ENCODE measurements at regions of chr11 and their contacts with region 1.

Region 1: DNA sequence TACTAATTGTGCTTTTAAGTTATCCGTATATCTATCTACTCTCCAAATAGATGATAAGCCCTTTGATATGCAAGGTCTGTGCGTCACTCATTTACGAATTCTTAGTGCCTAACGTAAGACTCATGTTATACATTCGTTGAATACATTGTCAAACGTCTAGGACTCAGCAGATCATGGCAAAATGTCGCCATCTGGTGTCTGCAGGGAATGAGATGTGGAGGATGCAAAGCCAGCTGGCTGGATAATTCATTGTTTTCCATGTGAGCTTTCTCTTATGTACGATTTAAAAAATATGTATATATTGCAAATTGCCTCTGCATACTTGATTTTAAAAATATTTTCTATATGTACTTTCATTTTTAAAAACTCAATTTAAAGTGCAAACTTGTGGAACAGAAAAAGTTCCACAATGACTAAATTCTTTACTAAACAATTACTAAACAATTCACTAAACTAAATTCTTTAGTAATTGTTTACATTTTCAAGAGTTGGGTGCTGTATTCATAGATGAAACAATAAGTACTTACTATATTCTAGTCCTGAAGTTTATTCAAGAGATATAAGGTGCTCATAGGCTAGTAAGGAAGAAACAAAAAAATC is 33.8 kb downstream of the ZNF202 start:
- DNase-seq: peak; percentile 78
- H3K4me3 Mint-ChIP-seq: no peak overlapping the region
- H3K27ac Mint-ChIP-seq: no peak overlapping the region
- H3K4me1 Mint-ChIP-seq: no peaks in the 10 kb centered on the region
- H3K27me3 Mint-ChIP-seq: peaks cover 15% of the 10 kb centered on the region
- CTCF ChIP-seq: peak; percentile 84

Region 2: DNA sequence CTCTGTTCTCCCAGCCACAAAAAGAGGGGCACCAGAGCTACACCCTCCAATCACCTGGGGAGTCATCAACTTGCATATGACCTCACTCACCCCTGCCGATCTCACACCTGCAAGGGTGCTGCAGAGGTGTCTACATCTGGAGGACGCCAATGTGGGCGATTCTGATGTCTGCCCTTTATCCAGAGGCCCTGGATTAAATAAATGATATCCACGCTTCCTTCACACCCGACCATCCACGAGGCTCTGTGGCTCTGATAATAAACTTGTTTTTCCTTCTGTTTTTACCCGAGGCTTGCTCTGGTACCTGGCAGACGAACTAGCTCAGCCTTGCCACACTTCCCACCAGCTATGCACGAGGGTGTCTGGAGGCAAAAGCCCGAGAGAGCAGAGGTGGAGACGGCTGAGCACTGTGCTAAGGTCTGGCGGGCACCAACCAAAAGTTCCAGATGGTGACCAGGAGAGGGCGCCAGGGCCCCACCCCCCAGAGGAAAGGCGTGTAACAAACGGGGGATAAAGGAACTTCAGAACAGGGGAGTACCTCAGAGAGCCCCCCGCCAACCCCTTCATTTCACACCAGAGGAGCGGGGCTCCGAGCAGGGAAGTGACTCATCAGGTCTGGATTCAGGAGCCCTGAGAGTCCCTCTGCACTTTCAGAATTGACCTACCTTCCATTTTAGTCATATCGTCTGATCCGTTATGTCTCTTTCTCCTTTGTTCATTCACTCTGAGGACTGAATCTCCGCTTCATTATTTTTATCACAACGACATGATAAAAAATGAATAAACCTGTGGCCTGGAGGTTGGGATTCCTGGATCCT is 66.8 kb before region 1 on chr11:
- CTCF ChIA-PET with region 1: interaction called, 558 read pairs
- POLR2A ChIA-PET with region 1: interaction called, 8 read pairs
- intact Hi-C with region 1: loop called (anchors 1 kb)
- DNase-seq: peak; percentile 54
- H3K4me3 Mint-ChIP-seq: no peak overlapping the region
- H3K27ac Mint-ChIP-seq: no peak overlapping the region
- H3K4me1 Mint-ChIP-seq: peaks cover 5% of the 10 kb centered on the region
- H3K27me3 Mint-ChIP-seq: peaks cover 37% of the 10 kb centered on the region
- CTCF ChIP-seq: peak; percentile 97

Region 3: GRCh38 chr11:123696183-123696582 is 11.5 kb before region 1 on chr11:
- CTCF ChIA-PET with region 1: interaction called, 17 read pairs
- POLR2A ChIA-PET with region 1: interaction called, 6 read pairs
- intact Hi-C with region 1: no loop called
- DNase-seq: peak; percentile 26
- H3K4me3 Mint-ChIP-seq: no peak overlapping the region
- H3K27ac Mint-ChIP-seq: no peak overlapping the region
- H3K4me1 Mint-ChIP-seq: no peaks in the 10 kb centered on the region
- H3K27me3 Mint-ChIP-seq: no peaks in the 10 kb centered on the region
- CTCF ChIP-seq: no peak

Region 4: DNA sequence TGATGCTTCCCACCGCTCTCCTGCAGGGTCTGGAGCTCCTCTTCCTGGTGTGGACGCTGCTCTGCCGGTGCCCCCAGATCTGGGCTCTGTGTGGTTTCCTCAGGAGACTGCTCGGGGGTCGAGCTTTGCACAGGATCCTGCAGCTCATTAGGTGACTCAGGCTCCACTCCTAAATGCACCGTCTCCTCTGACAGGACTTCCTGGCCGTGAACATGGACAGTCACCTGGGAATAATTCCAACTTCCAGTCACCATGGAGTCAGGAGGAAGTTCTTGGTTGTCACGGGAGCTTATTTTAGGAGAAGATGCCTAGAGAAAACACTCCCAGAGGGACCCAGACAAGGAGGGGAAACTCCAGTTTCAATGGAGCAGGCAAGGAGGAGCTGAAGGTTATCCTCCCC is 21.9 kb after region 1 on chr11:
- CTCF ChIA-PET with region 1: interaction called, 14 read pairs
- POLR2A ChIA-PET with region 1: no interaction called
- intact Hi-C with region 1: no loop called
- DNase-seq: no peak
- H3K4me3 Mint-ChIP-seq: no peak overlapping the region
- H3K27ac Mint-ChIP-seq: no peak overlapping the region
- H3K4me1 Mint-ChIP-seq: no peaks in the 10 kb centered on the region
- H3K27me3 Mint-ChIP-seq: no peaks in the 10 kb centered on the region
- CTCF ChIP-seq: no peak